ENCODE measurements at regions of chr2 and their contacts with region 1.

Region 1: GRCh38 chr2:176251928-176252327 is 17.3 kb upstream of the MTX2 start:
- DNase-seq: peak; percentile 85
- H3K4me3 ChIP-seq: no peak overlapping the region
- H3K27ac ChIP-seq: no peak overlapping the region
- H3K4me1 ChIP-seq: peaks cover 9% of the 10 kb centered on the region
- H3K27me3 ChIP-seq: no peaks in the 10 kb centered on the region
- CTCF ChIP-seq: no peak

Region 2: DNA sequence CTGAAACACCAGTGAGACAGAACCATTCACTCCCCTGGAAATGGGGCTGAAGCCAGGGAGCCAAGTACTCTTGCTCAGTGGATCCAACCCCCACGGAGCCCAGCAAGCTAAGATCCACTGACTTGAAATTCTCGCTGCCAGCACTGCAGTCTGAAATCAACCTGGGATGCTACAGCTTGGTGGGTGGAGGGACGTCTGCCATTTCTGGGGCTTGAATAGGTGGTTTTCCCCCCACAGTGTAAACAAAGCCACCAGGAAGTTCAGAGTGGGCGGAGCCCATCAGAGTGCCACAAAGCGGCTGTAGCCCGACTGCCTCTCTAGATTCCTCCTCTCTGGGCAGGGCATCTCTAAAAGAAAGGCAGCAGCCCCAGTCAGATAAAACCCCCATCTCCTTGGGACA is 542.7 kb before region 1 on chr2:
- CTCF ChIA-PET with region 1: no interaction called
- dilution Hi-C with region 1: no loop called
- in situ Hi-C with region 1: no loop called
- intact Hi-C with region 1: no loop called
- DNase-seq: no peak
- H3K4me3 ChIP-seq: no peak overlapping the region
- H3K27ac ChIP-seq: no peak overlapping the region
- H3K4me1 ChIP-seq: no peaks in the 10 kb centered on the region
- H3K27me3 ChIP-seq: no peaks in the 10 kb centered on the region
- CTCF ChIP-seq: no peak

Region 3: GRCh38 chr2:176024083-176024482 is 227.8 kb before region 1 on chr2:
- CTCF ChIA-PET with region 1: no interaction called
- dilution Hi-C with region 1: no loop called
- in situ Hi-C with region 1: no loop called
- intact Hi-C with region 1: no loop called
- DNase-seq: no peak
- H3K4me3 ChIP-seq: no peak overlapping the region
- H3K27ac ChIP-seq: no peak overlapping the region
- H3K4me1 ChIP-seq: no peaks in the 10 kb centered on the region
- H3K27me3 ChIP-seq: peaks cover 7% of the 10 kb centered on the region
- CTCF ChIP-seq: no peak

Region 4: DNA sequence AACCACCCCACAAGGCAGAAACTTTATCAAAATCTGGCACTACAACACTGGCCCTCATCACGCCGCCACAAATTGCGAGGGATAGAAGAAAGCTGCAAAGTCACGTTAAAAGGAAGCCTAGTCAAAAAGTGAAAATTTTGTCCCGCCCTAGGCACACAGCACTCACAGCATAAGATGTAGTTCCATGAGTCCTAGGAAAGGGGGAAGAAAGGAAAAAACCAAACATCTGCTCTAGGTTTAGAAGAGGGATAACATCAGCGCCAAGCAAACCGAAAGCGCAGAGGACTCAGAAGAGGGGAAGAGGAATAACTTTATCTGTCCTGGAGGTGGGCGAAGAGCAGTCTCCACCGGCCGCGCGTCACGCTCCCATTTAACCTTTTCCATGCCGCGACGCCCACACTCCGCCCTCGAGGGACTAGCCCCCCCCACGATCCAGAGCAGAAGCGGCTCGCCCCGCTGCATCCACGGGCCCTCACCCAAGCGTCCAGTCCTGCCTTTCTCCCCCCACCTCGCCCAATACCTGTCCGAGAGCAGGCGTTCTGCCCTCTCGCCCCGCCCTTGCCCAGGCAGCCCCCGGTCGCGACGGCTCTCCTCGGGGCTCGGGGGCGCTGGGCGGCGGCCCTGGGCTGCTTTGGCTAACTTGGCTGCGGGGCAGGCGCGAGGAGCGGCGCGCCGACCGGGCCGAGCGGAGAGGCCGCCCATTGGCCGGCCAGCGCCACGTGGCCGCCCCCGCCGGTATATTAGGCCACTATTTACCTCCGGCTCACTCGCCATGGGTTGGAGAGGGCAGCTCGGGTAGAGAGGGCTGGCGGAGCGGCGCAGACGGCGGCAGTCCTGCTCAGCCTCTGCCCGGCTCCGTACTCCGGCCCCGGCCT is 63.8 kb before region 1 on chr2 and contains the start of gene HOXD1:
- CTCF ChIA-PET with region 1: no interaction called
- dilution Hi-C with region 1: no loop called
- in situ Hi-C with region 1: no loop called
- intact Hi-C with region 1: no loop called
- DNase-seq: no peak
- H3K4me3 ChIP-seq: peak within 1 kb of the TSS; percentile 45 to 63 (median 52)
- H3K27ac ChIP-seq: no peak within 1 kb of the TSS
- H3K4me1 ChIP-seq: peaks cover 15% of the 10 kb centered on the region
- H3K27me3 ChIP-seq: peaks cover 39% of the 10 kb centered on the region
- CTCF ChIP-seq: no peak
- total RNA-seq, gene HOXD1: not detected

Region 5: DNA sequence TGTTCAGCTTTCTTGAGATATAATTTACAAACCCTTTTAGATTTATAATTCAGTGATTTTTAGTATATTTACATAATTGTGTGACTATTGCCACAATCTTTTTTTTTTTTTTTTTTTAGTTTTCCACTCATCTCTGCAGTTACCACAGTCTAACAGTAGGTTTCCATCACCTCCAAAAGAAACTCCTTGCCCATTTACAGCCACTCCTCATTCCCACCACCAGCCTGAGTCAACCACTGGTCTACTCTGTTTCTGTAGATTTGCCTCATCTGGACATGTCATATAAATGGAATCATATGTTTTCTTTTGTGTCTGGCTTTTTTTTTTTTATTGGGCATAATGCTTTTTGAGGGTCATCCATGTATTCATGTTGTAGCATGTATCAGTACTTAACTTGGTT is 33.4 kb after region 1 on chr2:
- CTCF ChIA-PET with region 1: no interaction called
- dilution Hi-C with region 1: no loop called
- in situ Hi-C with region 1: no loop called
- intact Hi-C with region 1: loop called (anchors 2 kb)
- DNase-seq: peak; percentile 46
- H3K4me3 ChIP-seq: no peak overlapping the region
- H3K27ac ChIP-seq: no peak overlapping the region
- H3K4me1 ChIP-seq: peaks cover 20% of the 10 kb centered on the region
- H3K27me3 ChIP-seq: no peaks in the 10 kb centered on the region
- CTCF ChIP-seq: peak in 1 of 2 donors; percentile 15

Region 6: GRCh38 chr2:176325732-176326131 is 73.8 kb after region 1 on chr2:
- CTCF ChIA-PET with region 1: no interaction called
- dilution Hi-C with region 1: no loop called
- in situ Hi-C with region 1: no loop called
- intact Hi-C with region 1: no loop called
- DNase-seq: no peak
- H3K4me3 ChIP-seq: no peak overlapping the region
- H3K27ac ChIP-seq: no peak overlapping the region
- H3K4me1 ChIP-seq: no peaks in the 10 kb centered on the region
- H3K27me3 ChIP-seq: no peaks in the 10 kb centered on the region
- CTCF ChIP-seq: no peak